Cardiac septum (tissue), 1 donor: ENCODE measurements at regions of chr1 and their contacts with region 1.

Region 1: DNA sequence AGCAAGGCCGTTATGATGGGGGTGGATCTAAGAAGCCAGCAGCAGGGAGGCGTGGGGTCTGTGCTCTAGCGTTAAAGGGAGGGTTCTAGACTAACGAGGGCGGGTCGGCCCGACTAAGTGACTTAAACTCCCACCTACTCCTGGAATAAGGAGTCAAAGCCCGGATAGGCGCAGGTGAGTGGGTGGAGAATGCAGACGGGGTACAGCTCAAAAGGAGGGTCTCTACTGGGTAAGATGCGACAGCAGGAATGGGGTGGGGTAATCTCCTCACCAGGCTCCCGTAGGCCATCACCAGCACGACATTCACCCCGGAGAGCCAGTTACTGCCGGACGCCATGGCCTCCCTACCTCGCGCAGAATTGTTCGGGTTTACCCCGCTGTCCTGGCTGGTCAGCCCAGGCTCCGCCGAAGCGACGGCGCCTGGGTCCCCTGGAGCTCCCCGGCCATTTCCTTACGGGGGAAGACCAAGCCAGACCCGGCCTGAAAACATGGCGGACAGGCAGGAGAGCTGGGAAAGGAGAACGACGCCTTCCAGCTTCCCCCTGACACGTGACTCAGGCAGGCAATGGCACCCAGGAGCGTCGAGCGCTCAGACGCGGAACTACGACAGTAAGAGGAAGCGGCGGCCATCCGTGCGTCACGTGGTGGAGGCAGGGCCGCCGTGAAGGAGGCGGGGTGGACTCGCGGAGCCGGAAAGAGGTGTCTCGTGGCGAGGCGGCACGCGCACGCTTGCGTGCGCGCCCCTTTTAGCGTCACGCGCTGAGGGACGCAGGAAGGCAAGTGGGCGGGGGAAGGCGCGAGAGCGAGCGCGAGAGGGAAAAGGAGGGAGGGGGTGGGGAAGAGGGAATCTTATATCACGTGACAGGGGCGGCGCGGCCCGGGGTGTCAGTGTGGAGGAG is at the start of gene UBAP2L:
- DNase-seq: peak; percentile 100
- total RNA-seq, gene UBAP2L: 111 TPM

Region 2: DNA sequence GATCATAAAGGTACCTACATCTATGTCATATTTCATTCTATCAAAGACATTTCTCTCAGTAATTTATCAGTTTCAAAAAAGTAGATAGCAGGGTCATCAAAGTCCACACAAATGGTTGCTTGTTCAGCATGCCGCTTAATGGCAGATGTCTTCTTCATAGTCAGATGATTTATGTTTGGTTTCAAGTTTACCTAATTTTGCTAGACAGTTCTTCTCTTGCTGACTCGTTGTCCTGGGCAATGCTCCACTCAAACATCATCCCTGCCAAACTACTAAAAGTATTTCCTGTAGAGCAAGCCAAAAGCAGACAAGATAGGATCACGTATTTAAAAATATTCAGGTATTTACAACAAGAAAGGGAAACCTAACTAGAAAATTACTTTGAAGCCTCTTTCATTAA is 79.1 kb before region 1 on chr1:
- intact Hi-C with region 1: no loop called
- DNase-seq: no peak

Region 3: DNA sequence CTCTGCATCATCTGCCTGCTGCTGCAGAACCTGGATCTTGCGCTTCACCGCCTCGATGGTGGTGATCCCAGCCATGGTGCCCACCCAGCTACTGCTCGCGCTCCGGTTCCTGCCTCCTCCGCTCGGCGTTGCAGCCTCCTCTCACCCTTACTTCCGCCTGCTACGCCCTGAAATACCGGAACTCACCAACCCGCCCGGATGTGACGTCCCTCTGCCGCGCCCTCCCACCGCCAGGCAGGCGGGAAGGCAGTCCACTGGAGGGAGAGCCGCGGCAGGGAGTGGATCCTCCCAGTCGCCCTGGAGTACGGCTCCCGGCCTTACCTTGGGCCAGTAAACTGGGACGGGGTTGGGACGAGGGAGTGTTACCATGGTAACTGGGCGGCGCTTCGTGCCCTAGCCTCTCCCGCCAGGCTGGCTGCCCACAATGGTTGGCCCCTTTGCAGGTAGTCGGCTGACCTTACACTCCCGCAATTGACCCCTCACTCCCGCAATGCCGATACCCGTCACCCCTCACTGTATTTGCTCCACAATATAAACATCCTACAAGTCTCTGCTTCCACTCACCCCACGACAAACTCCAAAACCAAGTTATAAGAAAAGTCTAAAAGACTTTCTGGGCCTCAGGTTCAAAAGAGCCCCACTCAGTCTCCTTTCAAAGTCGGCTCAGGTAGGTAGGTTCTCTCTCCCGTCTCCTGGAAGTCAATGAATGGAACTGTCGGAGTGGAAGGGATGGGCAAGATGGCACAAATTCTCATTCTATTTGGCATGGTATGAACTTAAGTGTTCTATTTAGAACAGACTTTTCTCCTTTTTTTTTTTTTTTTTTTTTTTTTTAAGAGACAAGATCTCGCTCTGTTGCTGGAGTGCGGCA is 37.0 kb before region 1 on chr1:
- intact Hi-C with region 1: loop called (anchors 2 kb)
- DNase-seq: peak; percentile 98

Region 4: DNA sequence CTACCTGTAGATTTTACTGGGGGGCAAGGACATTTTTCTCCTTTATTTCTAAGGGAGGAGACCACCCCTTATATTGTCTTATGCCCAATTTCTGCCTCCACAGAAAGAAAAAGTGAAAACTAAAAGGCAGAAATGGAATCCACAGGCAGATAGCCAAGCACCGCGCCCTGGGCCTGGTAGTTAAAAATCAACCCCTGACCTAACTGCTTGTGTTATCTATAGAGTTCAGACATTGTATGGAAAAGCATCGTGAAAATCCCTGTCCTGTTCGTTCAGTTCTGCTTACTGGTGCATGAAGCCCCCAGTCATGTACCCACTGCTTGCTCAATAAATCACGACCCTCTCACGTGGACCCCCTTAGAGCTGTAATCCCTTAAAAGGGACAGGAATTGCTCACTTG is 151.1 kb after region 1 on chr1:
- intact Hi-C with region 1: no loop called
- DNase-seq: no peak